ENCODE measurements at regions of chr14 and their contacts with region 1.

Region 1: GRCh38 chr14:80996049-80996901 is 40.9 kb downstream of the TSHR start:
- DNase-seq: peak in 1 of 3 donors; percentile 50
- ATAC-seq: peak; percentile 92 to 97 (median 94)
- H3K4me3 ChIP-seq: no peak overlapping the region
- H3K27ac ChIP-seq: no peak overlapping the region
- H3K4me1 ChIP-seq: peaks cover 0 to 17% (median 0%) of the 10 kb centered on the region in 4 donors
- H3K27me3 ChIP-seq: no peaks in the 10 kb centered on the region
- CTCF ChIP-seq: peak; percentile 61 to 85 (median 67)
- POLR2A ChIP-seq: no peak

Region 2: DNA sequence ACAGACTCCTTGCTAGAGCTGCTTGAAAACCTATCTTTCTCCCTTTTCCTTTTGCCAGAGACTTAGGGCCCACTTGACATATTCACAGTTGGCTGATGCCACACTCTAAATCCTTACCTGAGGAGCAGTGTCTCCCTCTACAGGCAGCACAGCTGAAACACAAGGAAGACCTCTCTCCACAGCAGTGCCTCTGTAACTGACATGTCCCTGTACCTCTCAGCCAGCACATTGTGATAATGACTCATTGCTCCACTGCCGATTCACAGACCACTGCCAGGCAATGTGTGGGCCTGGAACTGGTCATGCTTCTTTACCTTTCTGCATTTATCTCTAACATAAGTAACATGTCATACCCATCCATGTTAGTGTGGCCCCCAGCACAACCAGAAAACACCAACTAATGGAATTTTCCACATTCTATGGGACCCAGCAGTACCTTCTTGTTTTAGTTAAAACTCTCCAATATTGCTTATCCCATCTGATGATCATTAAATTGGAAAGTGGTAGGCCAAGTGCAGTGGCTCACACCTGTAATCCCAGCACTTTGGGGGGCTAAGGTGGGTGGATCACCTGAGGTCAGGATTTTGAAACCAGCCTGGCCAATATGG is 168.0 kb after region 1 on chr14:
- intact Hi-C with region 1: loop called in 1 of 2 experiments (anchors 10 kb)
- DNase-seq: peak in 2 of 3 donors; percentile 56 to 76
- ATAC-seq: peak; percentile 87 to 96 (median 90)
- H3K4me3 ChIP-seq: peak overlapping the region; percentile 16 to 42 (median 34)
- H3K27ac ChIP-seq: peak overlapping the region; percentile 62 to 75 (median 68)
- H3K4me1 ChIP-seq: peaks cover 0 to 27% (median 2%) of the 10 kb centered on the region in 4 donors
- H3K27me3 ChIP-seq: no peaks in the 10 kb centered on the region
- CTCF ChIP-seq: peak; percentile 71 to 90 (median 76)
- POLR2A ChIP-seq: peak; percentile 74

Measured in right lobe of liver (tissue), 6 donors.